ENCODE measurements at regions of chr22 and their contacts with region 1.

Region 1: DNA sequence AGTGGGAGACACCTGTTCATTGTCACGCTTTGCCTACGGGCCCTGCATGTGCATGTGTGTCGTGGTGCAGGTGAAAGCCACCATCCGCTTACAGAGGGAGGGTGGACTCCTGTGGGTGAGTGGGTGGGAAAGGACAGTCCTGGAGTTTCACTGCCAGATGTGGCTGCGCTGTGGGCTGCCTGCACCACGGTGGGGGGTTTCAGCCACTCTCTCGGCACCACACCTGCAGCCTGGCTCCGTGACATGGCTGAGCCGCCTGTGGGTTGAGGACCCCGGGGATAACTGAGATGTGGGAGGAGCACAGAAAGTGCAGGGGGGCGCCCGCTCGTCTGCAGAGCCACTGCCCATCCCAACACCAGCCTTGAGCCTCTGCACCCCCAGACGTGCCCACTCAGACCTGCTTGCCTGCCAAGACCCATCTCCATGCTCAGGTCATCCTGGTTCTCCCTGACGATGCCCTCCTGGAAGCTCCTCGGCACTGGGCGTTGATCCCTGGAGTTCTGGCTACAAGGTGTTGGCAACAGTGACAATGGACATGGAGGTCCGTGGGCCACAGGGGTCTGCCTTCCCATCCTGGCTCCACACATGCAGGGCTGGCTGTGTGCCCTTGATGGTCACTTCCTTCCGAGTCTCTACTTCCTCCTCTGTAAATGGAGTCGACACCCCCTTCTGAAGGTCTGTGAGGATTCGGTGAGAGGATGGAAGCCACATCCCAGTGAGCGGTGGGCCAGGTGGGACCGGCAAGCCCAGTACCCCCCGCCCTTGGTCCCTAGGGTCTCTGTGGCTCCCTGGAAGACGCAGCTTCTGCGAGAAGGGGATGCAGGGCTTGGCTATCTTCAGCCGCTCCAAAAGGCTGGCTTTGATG is 1007.0 kb downstream of the BRD1 start:
- DNase-seq: peak; percentile 57

Region 2: GRCh38 chr22:48546653-48547424 is 273.9 kb before region 1 on chr22:
- intact Hi-C with region 1: no loop called
- DNase-seq: no peak

Region 3: DNA sequence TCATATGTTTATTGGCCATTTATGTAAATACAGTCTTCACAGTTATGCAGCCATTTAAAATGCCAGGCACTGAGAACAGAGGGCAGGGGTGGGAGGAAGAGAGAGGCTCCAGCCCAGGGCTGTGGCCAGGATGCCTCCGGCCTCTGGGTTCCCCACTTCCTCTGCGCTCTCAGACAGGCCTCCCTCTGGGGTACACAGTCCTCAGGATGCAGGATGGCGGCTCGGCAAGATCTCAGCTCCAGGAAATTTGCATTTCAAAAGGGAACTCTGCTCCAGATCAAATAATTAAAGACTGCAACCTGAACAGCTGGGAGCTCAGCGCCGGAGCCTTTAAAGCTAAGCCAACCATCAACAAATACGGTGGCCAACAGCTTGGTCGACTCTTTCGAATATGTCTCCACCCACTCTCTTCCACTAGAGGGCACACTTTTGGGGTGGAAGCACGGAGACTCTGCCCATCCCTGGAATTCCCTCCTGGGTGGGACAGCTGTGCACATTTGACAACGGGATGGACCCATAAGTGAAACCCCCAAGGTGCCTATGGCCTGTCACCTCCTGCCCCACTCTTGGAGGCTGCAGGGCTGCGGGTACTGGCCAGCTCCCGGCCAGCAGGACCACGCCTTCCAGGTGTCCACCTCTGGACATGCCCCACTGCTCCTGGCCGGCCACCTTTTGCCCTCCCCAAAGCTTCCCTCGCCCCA is 37.8 kb before region 1 on chr22:
- intact Hi-C with region 1: loop called in 1 of 2 experiments (anchors 1 kb)
- DNase-seq: peak; percentile 44